ENCODE measurements at regions of chr11 and their contacts with region 1.

Region 1: GRCh38 chr11:37449146-37449545 is 851.1 kb upstream of the RAG2 start:
- DNase-seq: peak; percentile 66
- H3K4me3 Mint-ChIP-seq: no peak overlapping the region
- H3K27ac Mint-ChIP-seq: no peak overlapping the region
- H3K4me1 Mint-ChIP-seq: no peaks in the 10 kb centered on the region
- H3K27me3 Mint-ChIP-seq: no peaks in the 10 kb centered on the region
- CTCF ChIP-seq: peak; percentile 65

Region 2: GRCh38 chr11:36702330-36703055 is 746.7 kb before region 1 on chr11:
- CTCF ChIA-PET with region 1: no interaction called
- POLR2A ChIA-PET with region 1: no interaction called
- intact Hi-C with region 1: loop called (anchors 2 kb)
- DNase-seq: peak; percentile 78
- H3K4me3 Mint-ChIP-seq: no peak overlapping the region
- H3K27ac Mint-ChIP-seq: no peak overlapping the region
- H3K4me1 Mint-ChIP-seq: peaks cover 11% of the 10 kb centered on the region
- H3K27me3 Mint-ChIP-seq: peaks cover 3% of the 10 kb centered on the region
- CTCF ChIP-seq: peak; percentile 91

Region 3: DNA sequence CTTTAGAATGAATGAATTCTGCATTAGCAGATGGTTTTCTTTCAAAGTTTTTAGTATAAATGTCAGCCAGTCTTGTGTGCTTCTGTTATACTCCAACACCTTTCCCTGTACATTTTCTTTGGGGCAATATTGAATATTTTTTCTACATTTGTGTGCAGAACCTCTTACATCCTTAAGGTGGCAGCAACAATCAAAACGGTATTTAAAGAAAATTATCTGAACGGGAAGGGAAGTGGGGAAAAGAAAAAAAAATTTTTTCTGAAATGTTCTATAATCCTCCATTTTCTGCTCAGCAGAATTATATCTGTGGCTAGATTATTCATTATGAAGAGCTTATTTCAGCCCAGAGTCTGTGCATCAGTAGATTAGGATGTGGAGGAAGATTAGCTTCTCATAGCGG is 503.8 kb before region 1 on chr11:
- CTCF ChIA-PET with region 1: no interaction called
- POLR2A ChIA-PET with region 1: no interaction called
- intact Hi-C with region 1: loop called (anchors 5 kb)
- DNase-seq: peak; percentile 13
- H3K4me3 Mint-ChIP-seq: no peak overlapping the region
- H3K27ac Mint-ChIP-seq: no peak overlapping the region
- H3K4me1 Mint-ChIP-seq: no peaks in the 10 kb centered on the region
- H3K27me3 Mint-ChIP-seq: no peaks in the 10 kb centered on the region
- CTCF ChIP-seq: peak; percentile 42

Region 4: DNA sequence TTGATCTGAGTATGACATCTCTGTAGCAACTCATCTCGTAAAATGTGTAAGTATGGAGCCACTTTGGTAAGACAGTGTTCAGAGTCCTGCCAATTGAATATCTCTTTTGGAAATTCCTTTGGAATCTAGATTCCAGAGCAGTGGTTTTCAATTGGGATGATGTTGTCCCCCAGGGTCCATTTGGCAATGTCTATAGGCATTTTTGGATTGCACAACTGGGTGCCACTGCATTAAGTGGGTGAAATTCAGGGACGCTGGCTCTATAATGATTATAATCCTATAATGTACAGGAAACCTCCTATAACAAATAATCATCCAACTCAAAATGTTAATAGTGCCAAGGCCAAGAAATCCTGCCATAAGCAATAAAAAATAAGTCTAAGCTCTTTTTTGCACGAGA is 446.3 kb before region 1 on chr11:
- CTCF ChIA-PET with region 1: interaction called, 5 read pairs
- POLR2A ChIA-PET with region 1: no interaction called
- intact Hi-C with region 1: loop called (anchors 1 kb)
- DNase-seq: no peak
- H3K4me3 Mint-ChIP-seq: no peak overlapping the region
- H3K27ac Mint-ChIP-seq: no peak overlapping the region
- H3K4me1 Mint-ChIP-seq: no peaks in the 10 kb centered on the region
- H3K27me3 Mint-ChIP-seq: no peaks in the 10 kb centered on the region
- CTCF ChIP-seq: no peak

Region 5: DNA sequence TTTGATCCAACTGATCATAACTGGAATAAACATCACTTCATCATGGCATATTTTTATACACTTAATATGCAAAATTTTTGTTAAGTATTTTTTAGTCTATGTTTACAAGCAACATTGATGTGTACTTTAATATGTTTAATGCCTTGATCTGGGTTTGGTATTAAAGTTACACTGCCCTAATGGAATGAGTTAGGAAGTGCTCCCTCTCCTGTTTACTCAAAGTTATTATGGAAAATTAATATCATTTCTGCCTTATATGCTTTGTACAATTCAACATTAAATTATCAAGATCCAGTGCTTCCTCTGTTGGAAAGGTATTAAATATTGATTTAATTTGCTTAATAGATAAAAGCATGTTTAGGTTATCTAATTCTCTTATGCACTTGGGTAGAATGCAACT is 76.2 kb after region 1 on chr11:
- CTCF ChIA-PET with region 1: no interaction called
- POLR2A ChIA-PET with region 1: no interaction called
- intact Hi-C with region 1: loop called (anchors 1 kb)
- DNase-seq: no peak
- H3K4me3 Mint-ChIP-seq: no peak overlapping the region
- H3K27ac Mint-ChIP-seq: no peak overlapping the region
- H3K4me1 Mint-ChIP-seq: no peaks in the 10 kb centered on the region
- H3K27me3 Mint-ChIP-seq: no peaks in the 10 kb centered on the region
- CTCF ChIP-seq: peak; percentile 30

Region 6: GRCh38 chr11:38791302-38791961 is 1342.3 kb after region 1 on chr11:
- CTCF ChIA-PET with region 1: interaction called, 4 read pairs
- POLR2A ChIA-PET with region 1: no interaction called
- intact Hi-C with region 1: loop called (anchors 1 kb)
- DNase-seq: peak; percentile 82
- H3K4me3 Mint-ChIP-seq: no peak overlapping the region
- H3K27ac Mint-ChIP-seq: no peak overlapping the region
- H3K4me1 Mint-ChIP-seq: no peaks in the 10 kb centered on the region
- H3K27me3 Mint-ChIP-seq: no peaks in the 10 kb centered on the region
- CTCF ChIP-seq: peak; percentile 76

Region 7: DNA sequence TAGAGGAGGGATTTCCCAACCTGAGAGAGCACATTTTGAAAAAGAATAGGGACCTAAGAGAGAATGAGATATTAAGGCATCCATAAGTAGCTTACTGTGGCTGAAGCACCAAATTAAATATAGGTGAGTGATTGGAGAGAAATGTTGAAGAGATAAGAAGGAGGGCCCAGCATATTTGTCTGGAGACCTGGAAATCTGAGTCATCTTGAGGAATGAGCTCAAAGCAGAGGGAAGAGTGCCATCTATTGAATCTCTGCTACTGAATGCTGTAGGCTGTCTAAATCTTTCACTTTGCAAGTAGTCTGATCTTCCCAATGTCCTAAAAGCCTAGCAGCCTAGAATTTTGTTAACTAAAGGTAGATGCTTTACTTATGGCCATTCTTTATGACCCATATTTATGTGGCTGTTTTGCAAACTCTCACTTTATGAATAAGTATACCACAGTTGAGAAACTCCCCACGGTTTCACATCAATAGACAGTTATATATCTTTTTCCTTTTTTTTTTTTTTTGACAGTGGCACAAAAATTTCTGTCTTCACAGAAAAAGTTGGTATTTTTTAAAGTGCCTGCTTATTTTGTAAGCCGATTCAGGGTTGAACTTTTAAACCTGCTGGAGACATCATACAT is 1916.8 kb after region 1 on chr11:
- CTCF ChIA-PET with region 1: no interaction called
- POLR2A ChIA-PET with region 1: no interaction called
- intact Hi-C with region 1: loop called (anchors 1 kb)
- DNase-seq: peak; percentile 62
- H3K4me3 Mint-ChIP-seq: no peak overlapping the region
- H3K27ac Mint-ChIP-seq: no peak overlapping the region
- H3K4me1 Mint-ChIP-seq: peaks cover 7% of the 10 kb centered on the region
- H3K27me3 Mint-ChIP-seq: no peaks in the 10 kb centered on the region
- CTCF ChIP-seq: peak; percentile 34

Measured in MCF 10A (cell line).